Activated CD4-positive, alpha-beta T cell treated with anti-CD3 and anti-CD28 coated beads for 36 hours (primary cell): ENCODE measurements at regions of chr1 and their contacts with region 1.

Region 1: DNA sequence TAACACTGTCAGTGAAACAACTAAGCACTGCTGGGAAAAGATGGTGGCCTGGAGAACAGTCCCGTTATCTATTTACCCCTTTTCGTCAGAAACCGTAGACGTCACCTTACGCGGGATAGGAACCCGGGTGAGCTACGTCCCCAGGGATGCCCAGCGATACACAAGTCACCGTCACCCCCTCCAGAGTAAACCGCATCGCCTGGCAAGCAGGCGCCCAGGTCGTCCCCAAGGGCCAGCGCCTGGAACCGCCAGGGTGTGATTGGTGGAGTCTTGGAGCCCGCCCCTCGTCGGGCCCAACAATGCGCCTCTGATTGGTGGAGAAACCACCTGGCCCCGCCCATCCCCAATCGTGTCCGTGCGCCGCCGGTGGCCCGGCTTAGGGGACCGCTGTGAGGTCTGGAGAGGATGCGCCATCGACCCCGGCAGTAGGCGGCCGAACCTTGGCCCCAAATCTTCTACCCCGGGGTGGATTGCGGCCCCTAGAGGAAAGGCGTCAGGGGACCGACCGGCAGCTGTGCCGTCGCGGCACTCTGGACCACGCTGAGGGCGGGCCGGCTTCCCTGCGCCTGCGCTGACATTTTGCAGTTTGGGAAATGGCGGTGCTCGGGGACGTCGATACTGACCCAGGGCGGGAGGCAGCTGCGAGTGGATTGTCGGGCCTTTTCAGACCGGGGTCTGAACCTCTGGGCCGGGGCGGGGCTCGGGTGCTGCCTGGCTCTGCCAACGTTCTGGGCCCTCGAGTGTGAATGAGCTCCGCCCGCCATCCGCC is 34.4 kb downstream of the SLC2A1 start:
- DNase-seq: peak; percentile 95
- ATAC-seq: peak; percentile 87
- H3K4me3 Mint-ChIP-seq: peak overlapping the region; percentile 87
- H3K27ac Mint-ChIP-seq: peak overlapping the region; percentile 95
- H3K4me1 Mint-ChIP-seq: peaks cover 32% of the 10 kb centered on the region
- H3K27me3 Mint-ChIP-seq: no peaks in the 10 kb centered on the region

Region 2: DNA sequence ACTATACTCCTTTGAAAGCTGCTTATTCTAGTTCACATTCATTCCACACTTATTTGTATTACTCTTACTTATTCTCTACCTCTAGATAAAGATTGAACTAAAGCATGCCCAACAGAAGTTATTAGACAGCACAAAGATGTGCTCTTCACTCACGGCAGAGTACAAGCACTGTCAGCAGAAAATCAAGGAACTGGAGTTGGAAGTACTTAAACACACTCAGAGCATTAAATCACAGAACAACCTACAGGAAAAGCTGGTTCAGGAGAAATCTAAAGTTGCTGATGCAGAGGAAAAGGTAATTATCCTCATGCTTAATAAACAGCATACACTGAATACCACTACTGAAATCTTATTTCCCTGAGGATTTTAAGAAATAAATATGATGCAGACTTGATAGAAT is 347.3 kb before region 1 on chr1:
- CTCF ChIA-PET with region 1: no interaction called
- POLR2A ChIA-PET with region 1: no interaction called
- intact Hi-C with region 1: no loop called
- DNase-seq: no peak
- ATAC-seq: no peak
- H3K4me3 Mint-ChIP-seq: no peak overlapping the region
- H3K27ac Mint-ChIP-seq: no peak overlapping the region
- H3K4me1 Mint-ChIP-seq: no peaks in the 10 kb centered on the region
- H3K27me3 Mint-ChIP-seq: no peaks in the 10 kb centered on the region

Region 3: GRCh38 chr1:42681741-42682483 is 242.4 kb before region 1 on chr1 and contains the start of gene YBX1:
- CTCF ChIA-PET with region 1: no interaction called
- POLR2A ChIA-PET with region 1: no interaction called
- intact Hi-C with region 1: loop called in 1 of 2 experiments (anchors 1 kb)
- DNase-seq: peak; percentile 96
- ATAC-seq: peak; percentile 97
- H3K4me3 Mint-ChIP-seq: peak within 1 kb of the TSS; percentile 93
- H3K27ac Mint-ChIP-seq: peak within 1 kb of the TSS; percentile 97
- H3K4me1 Mint-ChIP-seq: peaks cover 41% of the 10 kb centered on the region
- H3K27me3 Mint-ChIP-seq: no peaks in the 10 kb centered on the region
- total RNA-seq, gene YBX1: 1,224 to 1,435 TPM

Region 4: GRCh38 chr1:42713293-42713692 is 211.0 kb before region 1 on chr1:
- CTCF ChIA-PET with region 1: no interaction called
- POLR2A ChIA-PET with region 1: no interaction called
- intact Hi-C with region 1: no loop called
- DNase-seq: no peak
- ATAC-seq: no peak
- H3K4me3 Mint-ChIP-seq: no peak overlapping the region
- H3K27ac Mint-ChIP-seq: no peak overlapping the region
- H3K4me1 Mint-ChIP-seq: peaks cover 7% of the 10 kb centered on the region
- H3K27me3 Mint-ChIP-seq: no peaks in the 10 kb centered on the region

Region 5: DNA sequence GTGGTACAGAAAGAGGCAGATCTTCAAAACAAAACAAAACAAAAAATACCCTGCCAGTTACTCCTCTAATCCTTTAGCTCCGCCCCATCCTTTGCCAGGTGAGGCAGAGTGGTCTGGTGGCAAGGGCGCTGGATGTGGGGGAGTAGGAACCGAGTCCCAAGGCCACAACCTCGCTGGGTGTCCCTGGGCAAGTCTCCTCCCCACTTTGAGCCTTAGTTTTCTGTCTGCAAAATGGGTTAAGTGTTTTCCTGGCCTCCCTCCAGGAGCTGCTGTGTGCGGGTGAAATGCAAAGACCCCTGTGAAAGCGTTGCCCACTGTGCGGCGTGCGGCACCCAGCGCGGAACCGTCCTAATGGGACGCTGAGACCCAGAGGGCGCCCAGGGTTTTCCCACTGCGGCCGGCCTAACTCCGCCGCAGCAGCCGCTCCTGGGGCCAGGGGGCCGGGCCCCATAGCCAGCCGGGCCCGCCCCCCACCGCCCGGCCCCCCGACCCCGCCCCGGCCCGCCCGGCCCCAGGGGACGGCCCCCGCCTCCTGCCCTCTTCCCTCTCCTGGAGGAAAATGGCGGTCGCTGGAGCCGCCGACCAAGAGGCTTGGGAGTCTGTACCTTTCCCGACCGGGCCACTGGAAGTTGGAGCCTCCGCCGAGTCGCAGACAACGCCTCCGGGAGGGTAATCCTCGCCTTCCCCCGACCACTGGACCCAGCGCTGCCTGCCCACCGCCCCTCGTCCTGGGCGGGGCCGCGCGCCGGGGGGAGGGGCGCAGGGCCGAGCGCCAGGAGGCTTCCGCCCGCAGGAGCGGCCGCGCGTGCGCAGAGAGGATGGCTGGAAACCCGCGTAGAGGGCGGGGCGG is 107.5 kb before region 1 on chr1 and contains the starts of genes ERMAP and SVBP:
- CTCF ChIA-PET with region 1: interaction called, 6 read pairs
- POLR2A ChIA-PET with region 1: no interaction called
- intact Hi-C with region 1: loop called in 1 of 2 experiments (anchors 1 kb)
- DNase-seq: peak; percentile 98
- ATAC-seq: peak; percentile 90
- H3K4me3 Mint-ChIP-seq: peak within 1 kb of the TSS; percentile 77
- H3K27ac Mint-ChIP-seq: peak within 1 kb of the TSS; percentile 84
- H3K4me1 Mint-ChIP-seq: peaks cover 16% of the 10 kb centered on the region
- H3K27me3 Mint-ChIP-seq: peaks cover 2% of the 10 kb centered on the region
- total RNA-seq, gene ERMAP: 4.5 to 6.4 TPM
- total RNA-seq, gene SVBP: 14.5 to 14.6 TPM

Region 6: GRCh38 chr1:42876009-42876408 is 48.3 kb before region 1 on chr1:
- CTCF ChIA-PET with region 1: no interaction called
- POLR2A ChIA-PET with region 1: no interaction called
- intact Hi-C with region 1: no loop called
- DNase-seq: no peak
- ATAC-seq: no peak
- H3K4me3 Mint-ChIP-seq: no peak overlapping the region
- H3K27ac Mint-ChIP-seq: no peak overlapping the region
- H3K4me1 Mint-ChIP-seq: no peaks in the 10 kb centered on the region
- H3K27me3 Mint-ChIP-seq: no peaks in the 10 kb centered on the region

Region 7: GRCh38 chr1:42886800-42887199 is 37.5 kb before region 1 on chr1:
- CTCF ChIA-PET with region 1: no interaction called
- POLR2A ChIA-PET with region 1: no interaction called
- intact Hi-C with region 1: no loop called
- DNase-seq: no peak
- ATAC-seq: no peak
- H3K4me3 Mint-ChIP-seq: no peak overlapping the region
- H3K27ac Mint-ChIP-seq: no peak overlapping the region
- H3K4me1 Mint-ChIP-seq: no peaks in the 10 kb centered on the region
- H3K27me3 Mint-ChIP-seq: peaks cover 4% of the 10 kb centered on the region

Region 8: DNA sequence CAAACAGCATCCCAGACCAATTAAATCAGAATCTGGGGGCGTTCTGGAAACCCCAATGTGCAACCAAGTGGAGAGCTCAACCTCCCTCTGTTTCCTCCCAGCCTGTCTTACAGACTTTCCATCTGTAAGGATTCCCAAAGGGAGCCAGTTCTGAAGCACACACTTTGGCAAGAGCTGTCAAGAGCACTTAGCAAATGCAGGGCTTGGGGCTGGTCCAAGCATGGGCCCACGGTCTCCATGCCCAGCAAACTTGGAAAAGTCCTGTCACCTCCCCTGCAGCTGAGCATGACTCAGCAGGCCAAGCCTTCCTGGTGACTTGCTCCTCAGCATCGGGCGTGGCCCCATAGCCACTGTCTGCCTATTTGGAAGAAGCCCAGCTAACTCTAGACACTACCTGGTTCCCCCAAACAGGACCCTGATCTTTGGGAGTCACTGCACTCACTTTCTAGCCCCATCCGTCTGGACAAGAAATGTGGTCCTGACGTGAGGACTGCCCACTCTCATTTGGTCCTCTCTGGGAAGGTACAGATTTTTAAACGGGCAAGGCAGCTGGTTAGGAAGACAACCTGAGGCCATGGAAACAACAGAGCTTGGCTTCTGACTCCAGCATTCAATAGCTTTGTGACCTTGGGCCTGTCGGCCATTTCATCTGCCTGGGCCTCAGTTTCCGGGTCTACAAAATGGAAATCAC is 17.5 kb after region 1 on chr1:
- CTCF ChIA-PET with region 1: interaction called, 11 read pairs
- POLR2A ChIA-PET with region 1: no interaction called
- intact Hi-C with region 1: no loop called
- DNase-seq: peak; percentile 55
- ATAC-seq: peak; percentile 14
- H3K4me3 Mint-ChIP-seq: no peak overlapping the region
- H3K27ac Mint-ChIP-seq: peak overlapping the region; percentile 79
- H3K4me1 Mint-ChIP-seq: peaks cover 95% of the 10 kb centered on the region
- H3K27me3 Mint-ChIP-seq: no peaks in the 10 kb centered on the region

Region 9: GRCh38 chr1:42958488-42959319 is 34.4 kb after region 1 on chr1 and contains the start of gene SLC2A1:
- CTCF ChIA-PET with region 1: interaction called, 12 read pairs
- POLR2A ChIA-PET with region 1: interaction called, 5 read pairs
- intact Hi-C with region 1: loop called (anchors 1 kb)
- DNase-seq: peak; percentile 99
- ATAC-seq: peak; percentile 89
- H3K4me3 Mint-ChIP-seq: peak within 1 kb of the TSS; percentile 89
- H3K27ac Mint-ChIP-seq: peak within 1 kb of the TSS; percentile 97
- H3K4me1 Mint-ChIP-seq: peaks cover 47% of the 10 kb centered on the region
- H3K27me3 Mint-ChIP-seq: peaks cover 6% of the 10 kb centered on the region
- total RNA-seq, gene SLC2A1: 115 to 125 TPM

Region 10: DNA sequence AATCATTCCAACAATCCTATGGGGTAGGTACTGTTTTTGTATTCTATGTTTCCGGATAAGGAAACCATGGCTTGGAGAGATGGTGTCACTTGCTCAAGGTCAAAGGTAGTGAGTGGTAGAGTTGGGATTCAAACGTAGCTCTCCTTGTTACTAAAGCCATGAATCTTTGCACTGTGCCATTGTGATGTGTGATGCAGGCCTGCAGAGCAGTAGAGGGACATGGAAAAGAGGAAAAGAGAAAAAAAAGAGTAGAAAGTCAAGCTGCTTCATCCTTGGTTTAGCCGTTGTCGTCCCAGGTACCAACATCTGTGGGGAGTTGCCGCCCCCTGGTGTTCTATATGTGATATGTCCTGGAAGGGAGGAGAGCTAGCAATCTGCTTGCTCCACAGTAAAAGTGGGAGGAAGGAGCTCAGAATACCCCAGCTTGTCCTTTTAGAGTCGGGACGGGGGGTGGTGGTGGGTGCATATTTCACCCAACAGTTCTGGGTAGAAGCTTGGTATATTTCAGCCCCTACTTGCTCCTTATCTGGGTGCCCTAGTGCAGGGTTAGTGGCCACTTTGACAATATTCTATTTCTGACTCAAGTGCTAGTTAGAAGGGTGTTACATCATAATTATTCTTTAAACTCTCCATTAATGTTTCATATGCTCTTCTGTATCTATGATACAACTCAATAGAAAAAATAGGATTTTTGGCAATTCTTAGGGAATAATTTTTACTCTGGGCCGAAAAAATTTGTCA is 149.4 kb after region 1 on chr1:
- CTCF ChIA-PET with region 1: interaction called, 427 read pairs
- POLR2A ChIA-PET with region 1: interaction called, 3 read pairs
- intact Hi-C with region 1: loop called (anchors 1 to 2 kb)
- DNase-seq: peak; percentile 83
- ATAC-seq: peak; percentile 93
- H3K4me3 Mint-ChIP-seq: no peak overlapping the region
- H3K27ac Mint-ChIP-seq: no peak overlapping the region
- H3K4me1 Mint-ChIP-seq: peaks cover 4% of the 10 kb centered on the region
- H3K27me3 Mint-ChIP-seq: no peaks in the 10 kb centered on the region